Heart right ventricle (tissue), 16 donors: ENCODE measurements at regions of chr5 and their contacts with region 1.

Region 1: GRCh38 chr5:65141493-65141892 is 340.2 kb downstream of the ADAMTS6 start:
- DNase-seq: no peak
- ATAC-seq: no peak
- H3K4me3 ChIP-seq: no peak overlapping the region
- H3K27ac ChIP-seq: no peak overlapping the region
- H3K4me1 ChIP-seq: peaks cover 0 to 20% (median 13%) of the 10 kb centered on the region in 9 donors
- H3K27me3 ChIP-seq: no peaks in the 10 kb centered on the region
- CTCF ChIP-seq: no peak

Region 2: GRCh38 chr5:65066385-65067146 is 74.9 kb before region 1 on chr5:
- intact Hi-C with region 1: no loop called
- DNase-seq: no peak
- ATAC-seq: peak in 1 of 8 donors; percentile 39
- H3K4me3 ChIP-seq: no peak overlapping the region
- H3K27ac ChIP-seq: no peak overlapping the region
- H3K4me1 ChIP-seq: peaks cover 0 to 28% (median 17%) of the 10 kb centered on the region in 9 donors
- H3K27me3 ChIP-seq: no peaks in the 10 kb centered on the region
- CTCF ChIP-seq: no peak

Region 3: DNA sequence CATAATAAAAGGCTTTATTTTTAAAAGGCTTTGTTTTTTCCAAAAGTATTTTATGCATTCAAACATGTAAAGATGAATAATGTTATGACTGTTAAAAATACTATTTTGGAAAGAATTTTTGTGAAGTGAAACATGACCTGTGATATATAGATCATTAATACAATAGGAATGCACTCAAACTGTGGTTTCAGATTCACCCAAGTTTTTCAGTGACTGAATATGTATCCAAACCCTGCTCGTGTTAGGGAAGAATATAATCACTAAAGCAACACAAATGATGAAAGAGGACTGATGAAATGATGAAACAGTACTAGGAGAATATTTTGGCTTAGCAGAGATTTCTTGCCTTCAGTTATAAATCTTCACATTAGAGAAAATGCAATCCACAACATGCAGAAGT is 62.3 kb after region 1 on chr5:
- intact Hi-C with region 1: loop called in 1 of 10 experiments (anchors 2 kb)
- DNase-seq: no peak
- ATAC-seq: no peak
- H3K4me3 ChIP-seq: no peak overlapping the region
- H3K27ac ChIP-seq: no peak overlapping the region
- H3K4me1 ChIP-seq: peaks cover 0 to 6% (median 0%) of the 10 kb centered on the region in 9 donors
- H3K27me3 ChIP-seq: no peaks in the 10 kb centered on the region
- CTCF ChIP-seq: no peak